ENCODE measurements at regions of chr7 and their contacts with region 1.

Region 1: GRCh38 chr7:108002726-108003598 is at the start of gene LAMB1:
- DNase-seq: no peak
- H3K4me3 ChIP-seq: peak within 1 kb of the TSS; percentile 66
- H3K27me3 ChIP-seq: no peaks in the 10 kb centered on the region; the same call in 1 of the 2 replicates
- CTCF ChIP-seq: 0 out of 2 replicates have a peak, but pooled peaks have one; percentile 7
- polyA plus RNA-seq, gene LAMB1: 171 and 204 TPM in 2 replicates

Region 2: GRCh38 chr7:108016841-108017775 is 14.1 kb after region 1 on chr7:
- CTCF ChIA-PET with region 1: interaction called, 12 read pairs
- POLR2A ChIA-PET with region 1: no interaction called
- DNase-seq: no peak
- H3K4me3 ChIP-seq: no peak overlapping the region
- H3K27me3 ChIP-seq: no peaks in the 10 kb centered on the region
- CTCF ChIP-seq: peak; percentile 45